ENCODE measurements at regions of chr6 and their contacts with region 1.

Region 1: DNA sequence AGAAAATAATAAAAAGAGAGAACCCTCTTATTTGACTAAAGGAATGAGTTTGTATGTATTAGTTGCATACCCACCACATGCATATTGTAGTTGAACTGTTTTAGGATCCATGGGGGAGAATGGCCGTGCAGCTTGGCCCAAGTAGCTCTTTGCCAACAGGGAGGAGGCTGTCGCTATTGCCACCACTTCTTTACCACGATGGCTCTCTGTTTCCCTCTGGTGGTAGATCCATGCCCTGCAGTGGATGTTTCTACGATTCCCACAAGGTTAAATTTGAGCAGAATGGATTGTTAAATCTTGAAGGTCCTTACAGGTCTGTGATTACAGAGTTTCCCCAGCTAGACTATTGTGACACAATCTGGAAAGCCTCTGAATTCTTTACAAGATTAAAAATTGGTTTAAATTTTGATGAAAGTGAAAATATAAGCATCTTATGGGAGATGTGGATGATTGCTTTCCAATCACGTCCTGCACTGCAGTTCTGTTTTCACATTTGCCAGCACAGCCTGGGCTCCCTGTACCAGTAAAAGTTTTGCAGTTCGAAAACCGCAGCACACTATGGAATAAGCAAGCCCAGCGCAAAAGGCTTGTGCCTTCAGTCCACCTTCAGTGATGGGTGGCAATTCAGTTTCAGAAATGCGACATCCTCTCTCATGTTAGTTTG is 34.4 kb upstream of the FNDC1 start:
- H3K4me3 ChIP-seq: no peak overlapping the region
- H3K27ac ChIP-seq: no peak overlapping the region
- H3K4me1 ChIP-seq: no peaks in the 10 kb centered on the region
- CTCF ChIP-seq: peak; percentile 75

Region 2: GRCh38 chr6:158835616-158836221 is 299.1 kb before region 1 on chr6:
- CTCF ChIA-PET with region 1: no interaction called
- POLR2A ChIA-PET with region 1: no interaction called
- H3K4me3 ChIP-seq: no peak overlapping the region
- H3K27ac ChIP-seq: no peak overlapping the region
- H3K4me1 ChIP-seq: no peaks in the 10 kb centered on the region
- CTCF ChIP-seq: no peak

Region 3: GRCh38 chr6:158958504-158959386 is 176.1 kb before region 1 on chr6:
- CTCF ChIA-PET with region 1: no interaction called
- POLR2A ChIA-PET with region 1: no interaction called
- H3K4me3 ChIP-seq: no peak overlapping the region
- H3K27ac ChIP-seq: no peak overlapping the region
- H3K4me1 ChIP-seq: no peaks in the 10 kb centered on the region
- CTCF ChIP-seq: no peak

Region 4: GRCh38 chr6:158999666-159000403 is 135.0 kb before region 1 on chr6 and contains the start of gene RSPH3:
- CTCF ChIA-PET with region 1: interaction called, 11 read pairs
- POLR2A ChIA-PET with region 1: no interaction called
- H3K4me3 ChIP-seq: peak within 1 kb of the TSS; percentile 75
- H3K27ac ChIP-seq: peak within 1 kb of the TSS; percentile 93
- H3K4me1 ChIP-seq: no peaks in the 10 kb centered on the region
- CTCF ChIP-seq: peak; percentile 84

Region 5: GRCh38 chr6:159017757-159018559 is 116.9 kb before region 1 on chr6:
- CTCF ChIA-PET with region 1: interaction called, 11 read pairs
- POLR2A ChIA-PET with region 1: no interaction called
- H3K4me3 ChIP-seq: no peak overlapping the region
- H3K27ac ChIP-seq: no peak overlapping the region
- H3K4me1 ChIP-seq: no peaks in the 10 kb centered on the region
- CTCF ChIP-seq: no peak

Region 6: GRCh38 chr6:159104163-159104925 is 30.5 kb before region 1 on chr6:
- CTCF ChIA-PET with region 1: interaction called, 49 read pairs
- POLR2A ChIA-PET with region 1: interaction called, 3 read pairs
- H3K4me3 ChIP-seq: no peak overlapping the region
- H3K27ac ChIP-seq: no peak overlapping the region
- H3K4me1 ChIP-seq: no peaks in the 10 kb centered on the region
- CTCF ChIP-seq: peak; percentile 77

Region 7: DNA sequence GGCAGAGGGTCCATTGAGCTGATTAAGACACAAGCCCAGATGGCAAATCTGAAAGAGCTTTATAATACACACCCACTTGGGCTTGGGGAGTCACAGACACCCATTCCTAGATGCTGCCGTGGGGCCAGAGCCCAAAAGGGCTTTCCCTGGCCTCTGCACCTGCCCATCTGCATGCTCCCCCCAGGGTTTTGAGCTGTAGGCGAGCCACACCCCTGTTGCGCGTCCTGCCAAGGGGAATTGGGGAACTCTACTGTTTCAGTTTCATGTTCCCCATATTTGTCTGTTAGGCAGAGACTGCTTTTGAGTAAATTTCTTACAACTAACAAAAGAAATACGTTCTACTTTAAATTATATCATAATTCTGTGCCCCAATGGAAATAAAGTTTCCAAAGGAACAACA is 18.5 kb before region 1 on chr6:
- CTCF ChIA-PET with region 1: interaction called, 76 read pairs
- POLR2A ChIA-PET with region 1: no interaction called
- H3K4me3 ChIP-seq: no peak overlapping the region
- H3K27ac ChIP-seq: no peak overlapping the region
- H3K4me1 ChIP-seq: no peaks in the 10 kb centered on the region
- CTCF ChIP-seq: no peak

Region 8: DNA sequence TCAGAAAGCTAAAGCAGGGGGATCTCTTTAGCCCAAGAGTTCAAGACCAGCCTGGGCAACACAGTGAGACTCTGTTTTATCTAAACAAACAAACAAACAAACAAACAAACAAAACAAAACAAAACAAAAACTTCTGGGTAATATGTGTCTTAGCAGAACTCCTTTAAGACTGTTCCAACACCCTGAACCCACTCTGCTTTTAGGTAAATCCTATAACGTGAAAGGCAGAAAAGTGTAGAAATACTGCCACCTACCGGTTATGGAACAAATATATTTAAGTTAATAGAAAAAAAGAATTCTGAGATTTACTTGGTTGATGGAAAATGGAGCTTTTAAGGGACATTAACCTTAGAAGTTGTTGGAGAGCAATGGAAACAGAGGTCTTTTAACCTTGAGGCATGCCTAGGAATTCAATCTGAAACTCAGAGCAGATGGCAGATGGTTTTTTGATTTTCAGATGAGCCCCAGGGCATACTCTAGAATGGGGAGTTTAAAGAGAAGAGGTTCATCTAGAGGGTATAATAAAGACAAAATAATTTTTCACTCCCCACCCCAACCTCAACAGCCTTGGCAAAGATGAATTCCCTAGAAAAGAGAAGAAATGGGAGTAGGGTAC is 519.8 kb after region 1 on chr6:
- CTCF ChIA-PET with region 1: interaction called, 16 read pairs
- POLR2A ChIA-PET with region 1: no interaction called
- H3K4me3 ChIP-seq: no peak overlapping the region
- H3K27ac ChIP-seq: no peak overlapping the region
- H3K4me1 ChIP-seq: no peaks in the 10 kb centered on the region
- CTCF ChIP-seq: peak; percentile 44; the same call in 1 of the 2 replicates

Measured in HEK293 (cell line).